Gastrocnemius medialis (tissue), 4 donors: ENCODE measurements at regions of chr2 and their contacts with region 1.

Region 1: DNA sequence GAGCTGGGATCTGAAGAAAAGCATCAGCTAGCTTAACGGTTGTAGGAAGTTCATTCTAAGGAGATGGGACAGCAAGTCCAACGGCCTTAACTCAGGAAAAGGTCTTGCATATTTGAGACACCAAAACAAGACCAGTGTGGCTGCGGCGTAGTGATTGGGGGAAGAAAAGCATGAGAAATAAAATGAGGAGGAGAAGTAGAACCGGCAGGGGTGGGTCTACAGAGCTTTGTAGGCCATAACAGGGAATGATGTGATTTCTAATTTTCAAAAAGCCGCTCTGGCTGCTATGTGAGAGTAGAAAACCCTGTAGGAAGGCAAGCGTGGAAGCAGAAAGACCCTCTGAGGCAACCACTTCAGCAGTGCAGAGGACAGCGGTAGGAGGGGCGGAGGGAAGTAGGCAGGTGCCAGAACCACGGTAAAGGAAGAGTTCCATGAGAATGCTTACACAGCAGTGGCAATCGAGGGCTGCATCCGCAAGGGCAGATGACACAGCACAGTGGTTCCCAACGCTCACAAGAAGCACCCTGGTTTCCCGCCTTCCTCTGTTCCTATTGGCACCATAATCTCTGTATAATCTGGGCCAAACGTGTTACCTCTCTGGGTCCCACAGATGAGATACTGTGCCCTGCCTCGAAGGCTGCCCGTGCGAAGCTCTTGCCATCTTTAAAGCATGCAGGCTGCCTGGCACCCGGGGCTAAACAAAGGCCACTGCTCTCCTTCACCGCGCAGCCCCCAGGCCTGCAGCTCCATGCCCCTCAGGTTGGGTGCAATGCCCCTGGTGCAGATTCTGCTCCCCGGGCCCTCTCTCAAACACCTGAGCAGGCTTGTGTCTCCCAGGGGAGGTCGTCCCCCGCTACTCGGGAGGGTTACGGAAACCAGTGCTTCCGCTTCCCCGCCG is 791 bp downstream of the ANKRD39 start:
- DNase-seq: peak in 1 of 2 donors; percentile 34
- ATAC-seq: peak; percentile 4 to 7
- H3K4me3 ChIP-seq: peak overlapping the region; percentile 69 to 90 (median 88)
- H3K27ac ChIP-seq: peak overlapping the region; percentile 86 to 93 (median 91)
- H3K4me1 ChIP-seq: peaks cover 12 to 19% of the 10 kb centered on the region in 2 donors
- H3K27me3 ChIP-seq: no peaks in the 10 kb centered on the region
- CTCF ChIP-seq: no peak
- POLR2A ChIP-seq: no peak

Region 2: GRCh38 chr2:96580771-96581170 is 276.3 kb before region 1 on chr2:
- in situ Hi-C with region 1: no loop called
- intact Hi-C with region 1: no loop called
- DNase-seq: no peak
- ATAC-seq: no peak
- H3K4me3 ChIP-seq: no peak overlapping the region
- H3K27ac ChIP-seq: no peak overlapping the region
- H3K4me1 ChIP-seq: no peaks in the 10 kb centered on the region
- H3K27me3 ChIP-seq: no peaks in the 10 kb centered on the region
- CTCF ChIP-seq: peak in 1 of 5 experiments; percentile 9
- POLR2A ChIP-seq: no peak

Region 3: DNA sequence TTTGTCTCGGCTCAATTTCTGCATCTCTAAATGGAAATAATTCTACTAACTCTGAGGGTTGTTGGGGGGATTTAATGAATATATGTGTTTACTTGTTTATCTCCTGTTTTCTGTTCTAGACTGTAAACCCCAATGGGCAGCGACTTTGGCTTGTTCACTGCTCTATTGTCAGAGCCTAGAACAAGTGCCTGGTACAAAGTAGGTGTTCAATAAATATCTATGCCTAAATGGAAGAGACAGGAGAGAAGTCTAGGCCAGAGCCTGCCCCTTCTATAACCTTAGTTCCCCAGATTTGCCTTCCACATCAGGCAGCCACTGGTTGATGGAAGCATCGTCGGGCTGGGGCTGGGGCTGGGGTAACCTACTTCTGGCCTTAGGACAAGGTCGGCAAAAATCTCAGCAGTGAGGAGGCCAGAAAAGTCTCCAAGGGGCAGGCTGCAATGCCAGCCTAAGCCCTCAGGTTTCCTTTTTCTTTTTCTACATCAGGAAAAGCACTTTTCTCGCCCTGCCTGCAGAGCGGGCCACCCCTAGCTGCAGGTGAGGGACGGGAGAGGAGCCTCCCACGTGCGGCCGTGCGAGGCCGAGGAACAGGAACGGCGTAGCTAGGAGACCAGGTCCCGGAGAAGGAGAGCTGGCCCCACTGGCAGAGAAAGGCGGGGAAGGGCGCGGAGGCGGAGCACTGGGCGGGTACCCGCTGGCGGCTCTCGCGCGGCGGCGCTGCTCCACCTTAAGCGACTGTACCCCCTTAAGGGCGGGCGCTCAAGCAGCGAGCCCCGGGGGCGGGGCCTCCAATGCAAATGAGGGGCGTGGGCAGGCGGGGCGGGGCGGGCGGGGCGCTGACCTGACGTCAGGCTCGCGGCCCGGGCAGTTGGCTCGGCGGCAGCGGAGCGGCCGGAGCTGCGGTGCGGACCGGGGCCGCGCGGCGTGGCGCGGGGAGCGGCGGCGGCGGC is 96.7 kb before region 1 on chr2 and contains the start of gene CNNM4:
- in situ Hi-C with region 1: no loop called
- intact Hi-C with region 1: loop called (anchors 5 kb)
- DNase-seq: peak; percentile 89 to 93
- ATAC-seq: peak; percentile 80 to 87
- H3K4me3 ChIP-seq: peak within 1 kb of the TSS; percentile 64 to 87 (median 74)
- H3K27ac ChIP-seq: peak within 1 kb of the TSS; percentile 83 to 91 (median 88)
- H3K4me1 ChIP-seq: peaks cover 39 to 41% of the 10 kb centered on the region in 2 donors
- H3K27me3 ChIP-seq: no peaks in the 10 kb centered on the region
- CTCF ChIP-seq: peak in 1 of 5 experiments; percentile 36
- POLR2A ChIP-seq: peak; percentile 84 to 90
- total RNA-seq, gene CNNM4: 5.4 to 20.1 (median 9.1) TPM

Region 4: DNA sequence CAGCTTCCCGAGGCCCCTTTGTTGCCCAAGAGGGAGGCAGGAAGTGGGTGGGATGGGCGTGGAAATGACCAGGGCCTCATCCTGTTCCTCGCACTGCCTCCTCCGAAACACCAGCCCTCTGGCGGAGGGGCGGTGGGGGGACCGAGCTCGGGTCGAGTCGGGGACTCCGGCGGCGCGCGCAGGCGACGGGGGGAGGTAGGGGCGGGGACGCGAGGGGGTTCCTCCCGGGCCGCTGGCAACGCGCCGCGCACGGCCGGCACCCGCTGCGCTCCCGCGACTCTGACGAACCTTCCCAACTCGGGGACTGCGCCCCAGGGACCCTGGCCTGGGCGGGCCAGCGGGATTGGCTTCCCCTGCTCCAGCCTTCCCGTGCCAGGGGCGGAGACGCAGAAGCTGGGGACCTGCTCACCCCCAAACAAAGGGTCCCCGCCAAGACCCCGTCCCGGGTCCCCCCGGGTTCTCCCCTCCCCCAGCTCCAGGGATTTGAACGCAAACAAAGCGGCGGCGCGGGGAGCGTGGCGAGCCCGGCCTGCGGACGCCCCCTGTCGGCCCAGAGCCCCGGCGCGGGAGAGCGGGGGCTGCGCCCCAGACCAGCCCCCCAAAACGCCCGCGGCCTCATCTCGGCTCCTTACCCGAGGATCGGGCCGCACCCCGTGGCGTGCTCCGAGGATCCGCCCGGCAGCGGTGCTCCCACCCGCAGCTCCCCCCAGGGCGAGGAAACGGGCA is 11.7 kb after region 1 on chr2:
- in situ Hi-C with region 1: no loop called
- intact Hi-C with region 1: loop called (anchors 1 kb)
- DNase-seq: peak; percentile 68 to 75
- ATAC-seq: peak; percentile 56
- H3K4me3 ChIP-seq: peak overlapping the region; percentile 74 to 95 (median 80)
- H3K27ac ChIP-seq: peak overlapping the region; percentile 86 to 90 (median 87)
- H3K4me1 ChIP-seq: peaks cover 24 to 29% of the 10 kb centered on the region in 2 donors
- H3K27me3 ChIP-seq: no peaks in the 10 kb centered on the region
- CTCF ChIP-seq: peak; percentile 55 to 73 (median 68)
- POLR2A ChIP-seq: peak; percentile 35 to 43

Region 5: DNA sequence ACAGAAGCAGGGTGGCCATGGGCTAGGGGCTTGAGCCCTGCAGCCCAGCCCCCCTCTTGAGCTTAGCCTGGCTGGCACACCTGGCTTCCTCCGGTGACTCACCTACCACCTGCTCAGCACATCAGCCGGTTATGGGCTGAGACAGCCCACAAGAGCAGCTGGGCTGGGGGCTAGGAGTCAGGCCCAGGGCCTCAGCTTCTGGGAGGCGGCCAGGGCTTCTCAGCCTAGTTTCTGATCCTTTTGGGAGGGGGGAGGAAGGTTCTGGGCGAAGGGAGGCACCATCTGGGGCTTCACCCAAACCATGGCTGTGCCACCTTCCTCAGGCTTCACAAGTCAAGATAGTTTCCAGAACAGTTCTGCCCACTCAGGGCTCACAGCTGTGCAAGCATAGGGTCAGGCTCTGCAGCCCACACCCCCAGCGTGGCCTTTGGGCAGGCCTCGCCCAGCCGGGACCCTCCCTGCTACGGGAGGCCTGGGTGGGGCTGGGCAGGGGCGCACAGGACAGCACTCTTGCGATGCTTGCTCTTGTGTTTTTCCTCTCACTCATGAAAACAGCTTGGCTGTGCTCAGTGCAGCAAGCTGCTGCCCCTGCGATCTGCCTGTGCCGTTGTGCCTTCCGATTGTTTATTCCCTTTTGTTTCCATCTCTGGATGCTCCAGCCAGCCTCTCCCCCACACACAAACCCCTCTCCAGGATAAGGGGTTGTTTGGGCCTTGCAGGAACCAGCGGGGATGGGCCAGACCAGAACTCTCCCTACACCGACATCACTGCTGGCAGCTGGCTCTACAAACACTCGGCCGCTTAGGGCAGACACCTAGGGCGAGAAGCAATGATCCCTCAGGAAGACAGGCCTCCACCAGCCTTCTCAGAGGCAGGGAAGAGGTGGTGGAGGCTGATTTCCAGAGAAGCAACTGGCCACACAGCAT is 39.0 kb after region 1 on chr2:
- in situ Hi-C with region 1: no loop called
- intact Hi-C with region 1: no loop called
- DNase-seq: peak in 1 of 2 donors; percentile 53
- ATAC-seq: peak; percentile 67 to 68
- H3K4me3 ChIP-seq: no peak overlapping the region
- H3K27ac ChIP-seq: peak overlapping the region in 3 of 4 donors; percentile 33 to 61 (median 56)
- H3K4me1 ChIP-seq: peaks cover 40 to 49% of the 10 kb centered on the region in 2 donors
- H3K27me3 ChIP-seq: no peaks in the 10 kb centered on the region
- CTCF ChIP-seq: no peak
- POLR2A ChIP-seq: no peak

Region 6: GRCh38 chr2:96951093-96951654 is 94.1 kb after region 1 on chr2:
- in situ Hi-C with region 1: loop called (anchors 5 kb)
- intact Hi-C with region 1: loop called (anchors 1 kb)
- DNase-seq: peak; percentile 46 to 65
- ATAC-seq: peak; percentile 78 to 90
- H3K4me3 ChIP-seq: no peak overlapping the region
- H3K27ac ChIP-seq: no peak overlapping the region
- H3K4me1 ChIP-seq: peaks cover 0 to 7% of the 10 kb centered on the region in 2 donors
- H3K27me3 ChIP-seq: no peaks in the 10 kb centered on the region
- CTCF ChIP-seq: peak; percentile 89 to 98 (median 94)
- POLR2A ChIP-seq: no peak